ENCODE measurements at regions of chr3 and their contacts with region 1.

Region 1: GRCh38 chr3:196332168-196332567 is 6.0 kb downstream of the TM4SF19 start:
- DNase-seq: no peak
- H3K4me3 Mint-ChIP-seq: no peak overlapping the region
- H3K27ac Mint-ChIP-seq: no peak overlapping the region
- H3K4me1 Mint-ChIP-seq: no peaks in the 10 kb centered on the region
- H3K27me3 Mint-ChIP-seq: peaks cover 15% of the 10 kb centered on the region

Region 2: GRCh38 chr3:196263819-196264218 is 68.3 kb before region 1 on chr3:
- CTCF ChIA-PET with region 1: no interaction called
- POLR2A ChIA-PET with region 1: no interaction called
- DNase-seq: no peak
- H3K4me3 Mint-ChIP-seq: no peak overlapping the region
- H3K27ac Mint-ChIP-seq: no peak overlapping the region
- H3K4me1 Mint-ChIP-seq: peaks cover 11% of the 10 kb centered on the region
- H3K27me3 Mint-ChIP-seq: no peaks in the 10 kb centered on the region

Region 3: GRCh38 chr3:196344663-196345062 is 12.5 kb after region 1 on chr3:
- CTCF ChIA-PET with region 1: no interaction called
- POLR2A ChIA-PET with region 1: no interaction called
- DNase-seq: no peak
- H3K4me3 Mint-ChIP-seq: no peak overlapping the region
- H3K27ac Mint-ChIP-seq: no peak overlapping the region
- H3K4me1 Mint-ChIP-seq: no peaks in the 10 kb centered on the region
- H3K27me3 Mint-ChIP-seq: no peaks in the 10 kb centered on the region

Region 4: GRCh38 chr3:196458063-196458462 is 125.9 kb after region 1 on chr3:
- CTCF ChIA-PET with region 1: no interaction called
- POLR2A ChIA-PET with region 1: interaction called, 13 read pairs
- DNase-seq: no peak
- H3K4me3 Mint-ChIP-seq: no peak overlapping the region
- H3K27ac Mint-ChIP-seq: no peak overlapping the region
- H3K4me1 Mint-ChIP-seq: peaks cover 9% of the 10 kb centered on the region
- H3K27me3 Mint-ChIP-seq: no peaks in the 10 kb centered on the region

Measured in activated CD4-positive, alpha-beta T cell treated with anti-CD3 and anti-CD28 coated beads, Interleukin-2, amount 10 ng/mL, durations not matched to agents 7 days and 5 days (primary cell).